GM23248 (cell line): ENCODE measurements at regions of chr2 and their contacts with region 1.

Region 1: DNA sequence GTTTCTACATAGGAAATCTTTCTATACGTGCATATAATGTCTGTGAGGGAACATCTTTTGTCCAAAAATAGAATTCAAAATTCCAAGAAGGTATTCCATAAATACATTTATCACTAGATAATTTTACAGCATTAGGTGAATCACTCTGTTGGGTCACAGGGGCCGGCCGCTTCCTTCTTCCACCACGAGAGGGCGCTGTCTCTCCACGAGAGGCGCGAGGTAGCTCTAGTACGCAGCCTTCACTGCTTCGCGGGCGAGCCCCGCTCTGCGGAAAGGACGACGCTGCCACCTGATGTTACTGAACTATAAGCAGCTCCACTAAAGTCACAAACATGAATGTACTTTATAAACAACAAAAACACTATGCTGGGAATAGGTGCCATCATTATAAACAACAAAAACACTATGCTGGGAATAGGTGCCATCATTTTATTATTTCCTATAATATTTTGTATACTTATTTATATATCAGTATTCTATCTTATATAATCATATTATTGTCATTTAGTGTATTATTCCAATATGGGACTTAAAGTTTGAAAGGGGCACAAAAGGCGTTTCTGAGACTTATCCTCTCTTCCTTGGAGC is 69.4 kb upstream of the REV1 start:
- DNase-seq: peak; percentile 82
- H3K4me3 ChIP-seq: no peak overlapping the region
- H3K27ac ChIP-seq: no peak overlapping the region
- H3K4me1 ChIP-seq: no peaks in the 10 kb centered on the region
- H3K27me3 ChIP-seq: no peaks in the 10 kb centered on the region; the same call in 1 of the 2 replicates

Region 2: DNA sequence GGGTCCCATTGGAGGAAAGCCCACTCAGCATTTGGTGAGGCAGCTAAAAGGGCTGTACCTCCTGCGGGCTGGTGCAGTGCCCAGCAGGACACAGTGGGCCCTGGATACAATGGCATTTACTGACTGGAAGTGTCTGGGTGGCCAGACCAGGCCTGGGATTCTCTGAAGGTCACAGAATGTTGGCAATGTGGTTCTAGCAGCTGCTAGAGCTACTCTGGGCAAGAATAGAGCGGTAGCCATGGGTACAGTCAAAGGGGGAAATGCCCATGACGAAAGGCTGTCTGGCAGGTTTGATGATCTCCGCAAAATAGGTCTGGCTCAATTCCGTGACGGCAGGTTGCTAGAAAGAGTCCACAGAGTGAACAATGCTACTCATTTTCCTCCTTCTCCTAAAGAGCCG is 341.4 kb after region 1 on chr2:
- in situ Hi-C with region 1: no loop called
- DNase-seq: no peak
- H3K4me3 ChIP-seq: no peak overlapping the region
- H3K27ac ChIP-seq: no peak overlapping the region
- H3K4me1 ChIP-seq: no peaks in the 10 kb centered on the region
- H3K27me3 ChIP-seq: no peaks in the 10 kb centered on the region; the same call in 1 of the 2 replicates

Region 3: DNA sequence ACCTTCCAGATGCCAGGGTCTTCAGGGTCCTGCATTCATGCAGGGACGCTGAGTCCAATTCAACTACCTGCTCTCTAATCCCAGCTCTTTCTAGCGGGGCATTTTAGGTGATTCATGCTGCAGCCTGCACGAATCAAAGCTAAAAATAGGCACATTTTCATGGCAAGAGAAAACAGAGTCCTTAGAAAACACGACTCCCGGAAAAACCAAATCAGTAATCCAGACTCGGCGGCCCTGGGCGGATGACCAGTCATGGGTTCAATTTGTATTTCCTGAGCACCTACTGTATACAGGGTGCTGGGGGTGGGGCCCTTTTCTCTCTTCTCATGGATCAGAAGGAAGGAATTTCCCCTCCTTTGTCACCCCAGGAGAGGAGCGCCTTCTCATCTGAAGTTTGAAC is 698.8 kb after region 1 on chr2:
- in situ Hi-C with region 1: loop called (anchors 10 kb)
- DNase-seq: peak; percentile 52
- H3K4me3 ChIP-seq: no peak overlapping the region
- H3K27ac ChIP-seq: no peak overlapping the region
- H3K4me1 ChIP-seq: no peaks in the 10 kb centered on the region
- H3K27me3 ChIP-seq: peaks cover 10% of the 10 kb centered on the region; the same call in 1 of the 2 replicates

Region 4: DNA sequence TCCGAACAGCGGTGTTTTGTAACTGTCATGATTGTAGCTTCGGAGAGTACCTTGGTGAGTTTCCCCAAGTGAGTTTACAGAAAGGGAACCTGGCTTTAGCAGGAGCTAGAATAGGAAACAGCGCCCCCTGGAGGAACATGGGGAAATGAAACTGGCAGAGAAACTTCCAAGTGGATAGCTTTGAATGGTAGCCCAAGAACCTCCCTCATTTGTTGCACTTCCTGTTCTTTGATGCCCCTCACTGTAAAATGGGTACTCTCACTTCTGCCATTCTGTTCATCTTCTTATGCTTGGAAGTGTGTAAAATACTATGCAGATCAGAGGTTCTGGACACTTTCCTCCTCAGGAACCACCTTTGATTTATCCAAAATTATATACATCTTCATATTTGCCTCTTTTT is 822.1 kb after region 1 on chr2:
- in situ Hi-C with region 1: loop called (anchors 25 kb)
- DNase-seq: peak; percentile 65
- H3K4me3 ChIP-seq: no peak overlapping the region
- H3K27ac ChIP-seq: no peak overlapping the region
- H3K4me1 ChIP-seq: no peaks in the 10 kb centered on the region
- H3K27me3 ChIP-seq: peaks cover 3% of the 10 kb centered on the region; the same call in 1 of the 2 replicates